ENCODE measurements at regions of chr9 and their contacts with region 1.

Region 1: GRCh38 chr9:124852829-124853531 is at the start of gene WDR38:
- DNase-seq: peak; percentile 73 to 91 (median 87)
- H3K4me3 ChIP-seq: peak within 1 kb of the TSS; percentile 44
- H3K4me3 Mint-ChIP-seq: peak within 1 kb of the TSS; percentile 56 to 88 (median 68)
- H3K27ac ChIP-seq: peak within 1 kb of the TSS; percentile 64
- H3K27ac Mint-ChIP-seq: peak within 1 kb of the TSS; percentile 64 to 91 (median 87)
- H3K4me1 ChIP-seq: peaks cover 15% of the 10 kb centered on the region
- H3K4me1 Mint-ChIP-seq: peaks cover 8 to 29% (median 10%) of the 10 kb centered on the region in 3 donors
- H3K27me3 ChIP-seq: no peaks in the 10 kb centered on the region
- H3K27me3 Mint-ChIP-seq: peaks cover 0 to 2% of the 10 kb centered on the region in 2 donors
- total RNA-seq, gene WDR38: not detected

Region 2: DNA sequence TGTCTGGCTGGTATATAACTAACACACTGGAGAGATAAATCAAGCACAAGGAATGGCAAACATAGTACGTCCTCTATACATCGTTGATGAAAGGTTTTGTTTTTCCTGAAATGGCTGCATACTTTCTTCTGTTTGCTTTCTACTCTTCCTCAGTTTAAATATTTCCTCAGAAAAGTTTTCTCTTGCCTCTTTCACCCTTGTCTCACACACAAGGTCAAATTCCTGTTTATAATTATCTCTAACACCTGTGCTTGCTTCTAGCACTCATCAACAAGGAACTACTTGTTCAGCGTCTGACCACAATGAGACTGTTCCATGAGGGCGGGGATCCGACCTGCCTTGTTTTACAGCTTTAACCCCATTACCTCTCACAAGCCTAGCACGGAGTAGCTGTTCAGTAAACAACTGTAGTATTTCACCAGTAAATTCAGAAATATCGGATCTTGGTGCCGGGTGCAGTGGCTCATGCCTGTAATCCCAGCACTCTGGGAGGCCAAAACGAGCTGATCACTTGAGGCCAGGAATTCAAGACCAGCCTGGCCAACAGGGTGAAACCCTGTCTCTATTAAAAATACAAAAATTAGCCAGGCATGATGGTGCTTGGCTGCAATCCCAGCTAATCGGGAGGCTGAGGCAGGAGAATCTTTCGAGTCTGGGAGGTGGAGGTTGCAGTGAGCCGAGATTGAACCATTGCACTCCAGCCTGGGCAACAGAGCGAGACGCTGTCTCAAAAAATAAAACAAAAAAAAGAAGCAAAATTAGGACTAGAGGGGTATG is 118.8 kb before region 1 on chr9:
- CTCF ChIA-PET with region 1: no interaction called
- POLR2A ChIA-PET with region 1: no interaction called
- DNase-seq: no peak
- H3K4me3 ChIP-seq: no peak overlapping the region
- H3K4me3 Mint-ChIP-seq: no peak overlapping the region
- H3K27ac ChIP-seq: no peak overlapping the region
- H3K27ac Mint-ChIP-seq: no peak overlapping the region
- H3K4me1 ChIP-seq: no peaks in the 10 kb centered on the region
- H3K4me1 Mint-ChIP-seq: no peaks in the 10 kb centered on the region
- H3K27me3 ChIP-seq: no peaks in the 10 kb centered on the region
- H3K27me3 Mint-ChIP-seq: peaks cover 14 to 32% of the 10 kb centered on the region in 2 donors

Region 3: DNA sequence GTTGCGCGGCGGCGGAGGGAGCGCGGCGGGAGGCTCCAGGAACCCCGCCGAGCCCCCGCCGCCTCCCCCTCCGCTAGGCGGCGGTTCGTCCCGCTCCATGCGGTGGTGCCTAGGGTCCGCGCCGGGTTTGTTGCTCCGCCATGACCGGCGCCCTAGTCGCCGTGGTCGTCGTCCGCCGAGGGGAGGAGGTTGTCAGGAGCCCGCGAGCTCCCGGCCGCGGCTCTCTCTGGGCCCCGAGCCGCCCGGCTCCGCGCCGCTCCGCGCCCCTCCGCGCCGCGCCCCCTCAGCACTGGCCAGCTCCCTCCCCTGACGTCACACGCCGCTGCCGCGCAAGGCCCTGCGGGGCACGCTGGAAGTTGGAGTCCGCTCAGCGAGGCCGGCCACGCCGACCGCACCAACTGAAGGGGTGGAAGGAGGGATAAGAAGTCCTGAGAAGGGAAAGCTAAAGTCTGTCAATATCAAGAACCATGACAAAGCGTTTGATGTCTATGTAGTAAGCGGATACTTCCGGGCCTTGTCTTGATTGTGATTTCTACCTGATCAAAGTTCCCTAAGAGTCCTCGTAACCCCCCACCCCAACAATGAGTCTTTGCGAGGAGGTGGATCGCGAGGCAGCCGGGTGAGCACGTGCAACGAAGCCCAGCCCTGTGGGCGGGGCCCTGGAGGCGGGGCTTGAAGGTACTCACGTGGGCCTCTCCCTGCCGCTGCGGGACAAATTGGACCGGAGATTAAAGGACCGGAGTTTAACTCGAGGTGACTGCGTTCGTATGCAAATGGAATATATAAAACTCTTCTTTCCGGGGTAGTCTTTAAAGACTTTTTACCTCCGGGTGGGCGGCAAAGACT is 81.7 kb before region 1 on chr9 and contains the start of gene NR6A1:
- CTCF ChIA-PET with region 1: interaction called, 121 read pairs
- POLR2A ChIA-PET with region 1: no interaction called
- DNase-seq: peak; percentile 91 to 96 (median 93)
- H3K4me3 ChIP-seq: peak within 1 kb of the TSS; percentile 83
- H3K4me3 Mint-ChIP-seq: peak within 1 kb of the TSS; percentile 88 to 96 (median 90)
- H3K27ac ChIP-seq: peak within 1 kb of the TSS; percentile 58
- H3K27ac Mint-ChIP-seq: peak within 1 kb of the TSS; percentile 63 to 96 (median 88)
- H3K4me1 ChIP-seq: peaks cover 25% of the 10 kb centered on the region
- H3K4me1 Mint-ChIP-seq: peaks cover 31 to 50% (median 40%) of the 10 kb centered on the region in 3 donors
- H3K27me3 ChIP-seq: peaks cover 58% of the 10 kb centered on the region
- H3K27me3 Mint-ChIP-seq: peaks cover 52 to 77% of the 10 kb centered on the region in 2 donors
- total RNA-seq, gene NR6A1: 2.4 to 3.0 TPM

Region 4: DNA sequence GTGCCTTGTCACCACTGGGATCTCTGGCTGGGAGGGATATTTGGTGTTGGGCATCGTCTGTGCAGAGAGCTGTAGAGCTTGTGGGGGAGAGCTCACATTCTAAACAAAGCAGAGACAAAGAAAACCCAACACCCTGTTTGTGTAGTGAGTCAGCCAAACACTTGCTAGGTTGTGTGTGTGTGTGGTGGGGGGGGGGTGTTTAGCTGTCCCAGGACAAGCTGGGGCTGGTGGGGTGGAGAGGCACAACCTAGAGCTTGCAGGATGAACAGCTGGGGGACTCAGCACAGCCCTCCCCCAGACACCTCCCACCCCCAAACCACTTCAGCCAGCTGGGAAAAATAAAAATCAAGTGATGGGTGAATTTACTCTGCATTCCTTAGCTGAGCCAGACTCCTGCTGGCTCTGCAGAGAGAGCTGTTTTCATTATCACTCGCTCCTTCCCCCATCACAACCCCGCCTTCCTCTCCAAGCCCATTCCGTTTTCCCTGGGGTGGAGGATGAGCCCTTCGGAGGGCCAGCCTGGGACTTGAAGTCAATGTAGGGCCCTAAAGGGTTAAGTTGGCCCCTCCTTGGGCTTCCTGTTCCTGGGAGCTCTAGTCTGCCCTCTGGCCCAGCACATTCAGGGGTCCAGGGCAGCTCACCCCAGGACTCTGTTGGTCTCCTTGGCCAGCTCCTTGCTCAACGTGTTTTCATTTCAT is 73.5 kb before region 1 on chr9:
- CTCF ChIA-PET with region 1: interaction called, 121 read pairs
- POLR2A ChIA-PET with region 1: no interaction called
- DNase-seq: no peak
- H3K4me3 ChIP-seq: no peak overlapping the region
- H3K4me3 Mint-ChIP-seq: no peak overlapping the region
- H3K27ac ChIP-seq: no peak overlapping the region
- H3K27ac Mint-ChIP-seq: peak overlapping the region in 1 of 8 donors; percentile 38
- H3K4me1 ChIP-seq: peaks cover 7% of the 10 kb centered on the region
- H3K4me1 Mint-ChIP-seq: peaks cover 7 to 18% (median 12%) of the 10 kb centered on the region in 3 donors
- H3K27me3 ChIP-seq: peaks cover 19% of the 10 kb centered on the region
- H3K27me3 Mint-ChIP-seq: peaks cover 14 to 16% of the 10 kb centered on the region in 2 donors

Region 5: DNA sequence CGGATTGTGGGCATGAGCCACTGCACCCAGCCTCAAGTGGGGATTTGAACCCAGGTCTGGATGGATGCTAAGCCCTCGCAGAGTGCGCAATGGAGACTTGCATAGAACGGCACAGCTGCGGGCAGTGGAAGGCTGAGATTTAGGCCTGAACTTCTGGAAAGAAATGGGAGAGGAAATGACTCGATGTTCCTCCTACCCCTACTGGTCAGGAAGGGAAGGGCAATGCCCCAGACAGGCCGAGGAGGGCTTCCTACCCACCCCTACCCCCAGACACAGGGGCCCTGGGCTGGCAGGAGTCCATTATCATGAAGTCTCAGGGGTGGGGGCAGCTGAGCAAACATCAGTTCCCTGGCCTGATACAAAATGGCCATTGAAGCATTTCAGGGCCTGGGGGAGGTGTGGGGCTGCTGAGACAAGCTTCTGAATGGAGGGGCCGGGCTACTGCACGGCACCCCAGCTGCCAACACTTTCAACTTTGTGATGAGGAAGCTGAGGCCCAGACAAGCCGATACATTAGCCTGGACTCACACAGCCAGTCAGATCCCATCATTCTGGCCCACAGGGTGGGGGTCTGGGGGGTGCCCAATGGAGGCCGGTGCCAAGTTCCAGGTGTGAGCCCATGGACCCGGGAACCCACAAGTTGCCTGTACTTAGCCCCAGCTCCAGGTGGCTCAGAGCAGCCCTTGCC is 13.2 kb before region 1 on chr9:
- CTCF ChIA-PET with region 1: interaction called, 14 read pairs
- POLR2A ChIA-PET with region 1: no interaction called
- DNase-seq: no peak
- H3K4me3 ChIP-seq: no peak overlapping the region
- H3K4me3 Mint-ChIP-seq: no peak overlapping the region
- H3K27ac ChIP-seq: no peak overlapping the region
- H3K27ac Mint-ChIP-seq: peak overlapping the region in 1 of 8 donors; percentile 30
- H3K4me1 ChIP-seq: no peaks in the 10 kb centered on the region
- H3K4me1 Mint-ChIP-seq: no peaks in the 10 kb centered on the region
- H3K27me3 ChIP-seq: no peaks in the 10 kb centered on the region
- H3K27me3 Mint-ChIP-seq: peaks cover 7 to 22% of the 10 kb centered on the region in 2 donors

Region 6: GRCh38 chr9:124868511-124869465 is 15.8 kb after region 1 on chr9:
- CTCF ChIA-PET with region 1: interaction called, 18 read pairs
- POLR2A ChIA-PET with region 1: interaction called, 6 read pairs
- DNase-seq: peak; percentile 87 to 93 (median 91)
- H3K4me3 ChIP-seq: peak overlapping the region; percentile 76
- H3K4me3 Mint-ChIP-seq: peak overlapping the region; percentile 90 to 98 (median 94)
- H3K27ac ChIP-seq: peak overlapping the region; percentile 95
- H3K27ac Mint-ChIP-seq: peak overlapping the region; percentile 93 to 99 (median 96)
- H3K4me1 ChIP-seq: peaks cover 46% of the 10 kb centered on the region
- H3K4me1 Mint-ChIP-seq: peaks cover 49 to 58% (median 50%) of the 10 kb centered on the region in 3 donors
- H3K27me3 ChIP-seq: no peaks in the 10 kb centered on the region
- H3K27me3 Mint-ChIP-seq: peaks cover 0 to 3% of the 10 kb centered on the region in 2 donors

Region 7: DNA sequence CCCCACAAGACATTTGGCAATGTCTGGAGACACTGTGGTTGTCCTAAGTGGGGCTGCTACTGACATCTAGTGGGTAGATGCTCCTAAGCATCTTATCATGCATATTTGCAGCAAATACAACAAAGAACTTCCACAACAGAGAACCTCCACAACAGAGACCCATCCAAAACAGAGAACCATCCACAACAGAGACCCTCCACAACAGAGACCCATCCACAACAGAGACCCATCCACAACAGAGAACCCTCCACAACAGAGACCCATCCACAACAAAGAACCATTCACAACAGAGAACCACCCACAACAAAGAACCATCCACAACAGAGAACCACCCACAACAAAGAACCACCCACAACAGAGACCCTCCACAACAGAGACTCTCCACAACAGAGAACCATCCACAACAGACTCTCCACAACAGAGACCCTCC is 41.8 kb after region 1 on chr9:
- CTCF ChIA-PET with region 1: interaction called, 16 read pairs
- POLR2A ChIA-PET with region 1: no interaction called
- DNase-seq: peak; percentile 7 to 88 (median 60)
- H3K4me3 ChIP-seq: no peak overlapping the region
- H3K4me3 Mint-ChIP-seq: peak overlapping the region in 3 of 7 donors; percentile 35 to 78 (median 62)
- H3K27ac ChIP-seq: no peak overlapping the region
- H3K27ac Mint-ChIP-seq: peak overlapping the region in 7 of 8 donors; percentile 15 to 91 (median 58)
- H3K4me1 ChIP-seq: no peaks in the 10 kb centered on the region
- H3K4me1 Mint-ChIP-seq: peaks cover 12 to 16% (median 15%) of the 10 kb centered on the region in 3 donors
- H3K27me3 ChIP-seq: no peaks in the 10 kb centered on the region
- H3K27me3 Mint-ChIP-seq: no peaks in the 10 kb centered on the region